Activated CD4-positive, alpha-beta memory T cell treated with anti-CD3 and anti-CD28 coated beads, Interleukin-2, amount 10 ng/mL, durations not matched to agents 7 days and 5 days (primary cell): ENCODE measurements at regions of chr6 and their contacts with region 1.

Region 1: GRCh38 chr6:5143634-5144311 is 58.6 kb downstream of the PPP1R3G start:
- DNase-seq: peak; percentile 87
- H3K4me3 Mint-ChIP-seq: no peak overlapping the region
- H3K27ac Mint-ChIP-seq: no peak overlapping the region
- H3K4me1 Mint-ChIP-seq: peaks cover 1% of the 10 kb centered on the region
- H3K27me3 Mint-ChIP-seq: no peaks in the 10 kb centered on the region

Region 2: GRCh38 chr6:4848382-4849068 is 295.2 kb before region 1 on chr6:
- CTCF ChIA-PET with region 1: no interaction called
- POLR2A ChIA-PET with region 1: no interaction called
- DNase-seq: no peak
- H3K4me3 Mint-ChIP-seq: no peak overlapping the region
- H3K27ac Mint-ChIP-seq: no peak overlapping the region
- H3K4me1 Mint-ChIP-seq: peaks cover 6% of the 10 kb centered on the region
- H3K27me3 Mint-ChIP-seq: no peaks in the 10 kb centered on the region

Region 3: GRCh38 chr6:5167501-5167900 is 23.7 kb after region 1 on chr6:
- CTCF ChIA-PET with region 1: interaction called, 14 read pairs
- POLR2A ChIA-PET with region 1: no interaction called
- DNase-seq: no peak
- H3K4me3 Mint-ChIP-seq: no peak overlapping the region
- H3K27ac Mint-ChIP-seq: no peak overlapping the region
- H3K4me1 Mint-ChIP-seq: peaks cover 6% of the 10 kb centered on the region
- H3K27me3 Mint-ChIP-seq: no peaks in the 10 kb centered on the region

Region 4: DNA sequence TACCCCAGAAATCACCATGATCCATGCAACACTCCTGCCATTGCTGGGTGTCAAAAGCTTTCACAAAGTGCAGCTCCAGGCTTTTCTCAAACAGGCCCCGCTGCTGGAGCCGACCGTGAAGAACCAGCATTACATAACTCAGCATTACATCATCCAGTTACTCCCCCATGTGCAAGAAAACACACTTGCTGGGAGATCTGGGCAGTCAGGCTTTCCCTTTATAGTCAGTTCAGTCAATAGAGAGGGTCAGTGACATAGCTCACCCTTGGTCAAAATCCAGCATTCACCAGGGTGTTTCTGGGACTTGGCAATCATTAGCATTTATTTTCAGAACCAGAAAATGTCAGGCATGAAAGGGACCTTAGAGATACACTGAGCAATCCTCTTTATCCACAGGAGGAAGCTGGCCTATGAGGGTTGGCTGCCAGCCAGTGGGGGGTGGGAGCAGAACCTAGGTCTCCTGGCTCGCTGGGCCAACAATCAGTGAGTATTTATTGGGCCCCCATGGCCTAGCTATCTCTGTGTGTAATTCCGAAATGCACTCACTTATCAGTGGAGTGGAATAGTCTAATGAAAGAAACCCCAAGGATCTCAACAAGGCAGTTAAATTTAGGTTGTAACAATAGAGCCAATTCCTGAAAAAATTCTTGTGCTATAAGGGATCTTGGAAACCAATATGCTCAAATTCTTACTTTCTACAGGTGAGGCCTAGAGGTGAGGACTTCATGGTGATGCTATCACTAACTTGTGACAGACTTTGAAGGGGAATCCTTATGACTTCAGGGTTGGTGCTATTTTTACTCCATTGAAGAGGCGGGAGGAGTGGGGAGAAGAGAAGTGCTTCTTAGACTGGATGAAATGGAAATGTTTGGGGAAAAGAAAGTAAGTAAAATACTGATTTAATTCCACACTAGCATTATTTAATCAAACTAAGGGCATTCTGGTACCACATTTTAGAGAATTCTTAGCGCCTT is 62.4 kb after region 1 on chr6:
- CTCF ChIA-PET with region 1: interaction called, 11 read pairs
- POLR2A ChIA-PET with region 1: no interaction called
- DNase-seq: no peak
- H3K4me3 Mint-ChIP-seq: no peak overlapping the region
- H3K27ac Mint-ChIP-seq: no peak overlapping the region
- H3K4me1 Mint-ChIP-seq: no peaks in the 10 kb centered on the region
- H3K27me3 Mint-ChIP-seq: no peaks in the 10 kb centered on the region

Region 5: GRCh38 chr6:5250911-5251310 is 107.1 kb after region 1 on chr6:
- CTCF ChIA-PET with region 1: interaction called, 15 read pairs
- POLR2A ChIA-PET with region 1: no interaction called
- DNase-seq: no peak
- H3K4me3 Mint-ChIP-seq: no peak overlapping the region
- H3K27ac Mint-ChIP-seq: no peak overlapping the region
- H3K4me1 Mint-ChIP-seq: peaks cover 2% of the 10 kb centered on the region
- H3K27me3 Mint-ChIP-seq: no peaks in the 10 kb centered on the region

Region 6: GRCh38 chr6:5302995-5303622 is 159.3 kb after region 1 on chr6:
- CTCF ChIA-PET with region 1: interaction called, 72 read pairs
- POLR2A ChIA-PET with region 1: interaction called, 9 read pairs
- DNase-seq: peak; percentile 78
- H3K4me3 Mint-ChIP-seq: peak overlapping the region; percentile 62
- H3K27ac Mint-ChIP-seq: peak overlapping the region; percentile 87
- H3K4me1 Mint-ChIP-seq: peaks cover 47% of the 10 kb centered on the region
- H3K27me3 Mint-ChIP-seq: no peaks in the 10 kb centered on the region

Region 7: GRCh38 chr6:5398530-5398929 is 254.8 kb after region 1 on chr6:
- CTCF ChIA-PET with region 1: interaction called, 31 read pairs
- POLR2A ChIA-PET with region 1: no interaction called
- DNase-seq: no peak
- H3K4me3 Mint-ChIP-seq: no peak overlapping the region
- H3K27ac Mint-ChIP-seq: no peak overlapping the region
- H3K4me1 Mint-ChIP-seq: peaks cover 10% of the 10 kb centered on the region
- H3K27me3 Mint-ChIP-seq: no peaks in the 10 kb centered on the region